CD8-positive, alpha-beta T cell (primary cell): ENCODE measurements at regions of chr4 and their contacts with region 1.

Region 1: GRCh38 chr4:122577808-122578781 is 42.8 kb downstream of the IL21 start:
- DNase-seq: peak; percentile 32 to 89 (median 57)
- ATAC-seq: peak; percentile 83
- H3K4me3 ChIP-seq: no peak overlapping the region
- H3K4me3 Mint-ChIP-seq: peak overlapping the region; percentile 69
- H3K27ac ChIP-seq: peak overlapping the region; percentile 26 to 47
- H3K27ac Mint-ChIP-seq: peak overlapping the region; percentile 92
- H3K4me1 ChIP-seq: peaks cover 12% of the 10 kb centered on the region
- H3K4me1 Mint-ChIP-seq: peaks cover 27% of the 10 kb centered on the region
- H3K27me3 ChIP-seq: no peaks in the 10 kb centered on the region
- H3K27me3 Mint-ChIP-seq: peaks cover 2% of the 10 kb centered on the region
- CTCF ChIP-seq: peak; percentile 83

Region 2: DNA sequence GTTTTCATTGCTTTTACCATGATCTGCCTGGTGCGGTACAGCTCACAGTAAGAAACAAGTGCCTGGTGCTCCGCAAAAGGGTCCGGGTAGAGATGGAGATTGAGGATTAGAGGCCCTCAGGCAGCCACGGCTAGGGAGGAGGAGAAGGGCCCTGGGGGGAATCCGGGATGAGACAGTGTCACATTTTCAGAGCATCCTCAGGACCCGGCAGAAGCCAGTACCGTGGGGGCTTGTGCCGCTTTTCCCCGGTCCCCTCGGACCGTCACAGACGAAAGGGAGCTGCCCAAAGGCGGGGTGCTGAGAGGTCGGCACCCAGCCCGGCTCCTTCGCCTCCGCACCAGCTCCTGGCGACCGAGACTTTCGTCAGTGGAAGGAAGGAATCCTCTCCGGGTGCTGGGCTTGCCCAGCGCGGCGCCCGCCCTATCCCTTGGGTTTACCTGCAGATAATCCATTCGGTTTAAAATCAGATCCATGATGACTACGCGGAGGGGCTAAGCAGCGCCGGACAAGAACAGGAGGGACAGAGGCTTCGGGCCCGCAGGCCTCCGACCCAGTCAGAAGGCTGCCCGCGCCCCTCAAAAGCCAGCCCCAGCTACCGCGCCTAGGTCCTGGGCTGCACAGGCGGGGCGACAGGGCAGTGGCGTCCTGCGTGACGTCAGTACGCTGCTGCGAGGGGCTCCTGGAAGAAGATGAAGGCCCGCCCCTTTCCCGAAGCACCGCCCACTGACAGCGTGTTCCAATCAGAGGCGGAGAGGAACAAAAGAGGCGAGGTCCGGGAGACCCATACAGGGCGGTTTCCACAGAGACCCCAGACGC is 708.0 kb before region 1 on chr4 and contains the start of gene BBS7:
- CTCF ChIA-PET with region 1: no interaction called
- POLR2A ChIA-PET with region 1: no interaction called
- intact Hi-C with region 1: loop called in 1 of 2 experiments (anchors 1 kb)
- DNase-seq: peak; percentile 91 to 98 (median 96)
- ATAC-seq: peak; percentile 99
- H3K4me3 ChIP-seq: peak within 1 kb of the TSS; percentile 88 to 92
- H3K4me3 Mint-ChIP-seq: peak within 1 kb of the TSS; percentile 97
- H3K27ac ChIP-seq: peak within 1 kb of the TSS; percentile 74 to 79
- H3K27ac Mint-ChIP-seq: peak within 1 kb of the TSS; percentile 92
- H3K4me1 ChIP-seq: peaks cover 6% of the 10 kb centered on the region
- H3K4me1 Mint-ChIP-seq: peaks cover 14% of the 10 kb centered on the region
- H3K27me3 ChIP-seq: no peaks in the 10 kb centered on the region
- H3K27me3 Mint-ChIP-seq: peaks cover 7% of the 10 kb centered on the region
- CTCF ChIP-seq: no peak
- total RNA-seq, gene BBS7: 3.4 to 4.7 TPM

Region 3: DNA sequence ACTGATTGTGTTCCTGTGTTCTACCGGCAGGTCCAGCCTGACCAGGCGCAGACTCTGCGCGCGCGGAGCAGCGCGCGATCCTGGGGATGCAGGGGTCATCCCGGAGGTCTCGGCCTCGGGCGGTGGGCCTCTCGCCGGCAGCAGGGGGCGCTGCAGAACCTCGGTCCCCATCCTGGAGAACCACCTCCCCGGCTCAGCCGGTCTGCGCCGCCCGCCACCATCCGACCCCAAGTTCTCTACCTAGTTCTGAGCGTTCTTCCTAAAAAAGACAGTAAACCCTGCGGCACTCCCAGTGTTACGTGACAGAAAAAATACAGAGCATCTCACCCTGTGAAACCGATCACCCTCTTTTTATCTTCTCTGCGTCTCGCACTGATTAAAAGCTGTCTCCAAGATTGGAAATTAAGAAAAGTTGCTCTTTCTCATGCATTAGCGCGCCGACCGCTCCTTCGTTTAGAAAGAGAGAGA is 627.8 kb before region 1 on chr4:
- CTCF ChIA-PET with region 1: interaction called, 3 read pairs
- POLR2A ChIA-PET with region 1: no interaction called
- intact Hi-C with region 1: loop called (anchors 2 kb)
- DNase-seq: peak; percentile 74 to 91 (median 85)
- ATAC-seq: peak; percentile 84
- H3K4me3 ChIP-seq: peak overlapping the region; percentile 65 to 71
- H3K4me3 Mint-ChIP-seq: peak overlapping the region; percentile 88
- H3K27ac ChIP-seq: peak overlapping the region in 1 of 2 experiments; percentile 34
- H3K27ac Mint-ChIP-seq: no peak overlapping the region
- H3K4me1 ChIP-seq: peaks cover 3% of the 10 kb centered on the region
- H3K4me1 Mint-ChIP-seq: peaks cover 8% of the 10 kb centered on the region
- H3K27me3 ChIP-seq: peaks cover 7 to 8% of the 10 kb centered on the region in 2 experiments
- H3K27me3 Mint-ChIP-seq: peaks cover 51% of the 10 kb centered on the region
- CTCF ChIP-seq: peak; percentile 86

Region 4: DNA sequence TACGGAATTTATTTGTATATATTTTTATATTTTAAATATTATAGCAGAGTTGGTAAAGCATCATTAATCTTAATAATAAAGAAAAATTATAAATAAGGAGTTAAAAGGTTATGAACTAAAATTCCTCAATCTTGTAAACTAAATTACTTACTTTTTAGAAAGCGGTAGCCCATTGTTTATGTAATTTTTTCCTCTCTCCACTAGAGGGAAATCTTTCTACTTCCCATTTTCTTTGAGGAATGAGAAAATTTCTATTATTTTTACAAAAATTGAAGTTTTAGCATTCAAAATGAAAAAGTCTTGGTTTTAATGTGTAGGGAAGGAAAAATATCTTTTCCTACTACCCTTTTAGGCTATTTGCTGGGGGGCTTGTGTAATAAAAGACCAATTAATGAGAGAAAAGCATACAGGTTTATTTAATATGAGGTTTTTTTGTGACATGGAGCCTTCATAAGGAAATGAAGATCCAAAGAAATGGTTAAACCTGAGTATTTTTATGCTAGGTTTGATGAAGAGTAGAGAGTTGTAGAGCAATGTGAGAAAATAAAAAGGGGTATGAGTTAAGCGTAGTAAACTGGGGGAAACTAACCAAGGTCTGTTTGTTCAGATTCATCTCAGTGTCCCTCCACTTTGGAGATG is 268.0 kb before region 1 on chr4:
- CTCF ChIA-PET with region 1: interaction called, 22 read pairs
- POLR2A ChIA-PET with region 1: no interaction called
- intact Hi-C with region 1: loop called (anchors 2 kb)
- DNase-seq: peak in 1 of 9 experiments; percentile 11
- ATAC-seq: no peak
- H3K4me3 ChIP-seq: no peak overlapping the region
- H3K4me3 Mint-ChIP-seq: no peak overlapping the region
- H3K27ac ChIP-seq: no peak overlapping the region
- H3K27ac Mint-ChIP-seq: no peak overlapping the region
- H3K4me1 ChIP-seq: no peaks in the 10 kb centered on the region
- H3K4me1 Mint-ChIP-seq: no peaks in the 10 kb centered on the region
- H3K27me3 ChIP-seq: no peaks in the 10 kb centered on the region
- H3K27me3 Mint-ChIP-seq: no peaks in the 10 kb centered on the region
- CTCF ChIP-seq: peak; percentile 63

Region 5: DNA sequence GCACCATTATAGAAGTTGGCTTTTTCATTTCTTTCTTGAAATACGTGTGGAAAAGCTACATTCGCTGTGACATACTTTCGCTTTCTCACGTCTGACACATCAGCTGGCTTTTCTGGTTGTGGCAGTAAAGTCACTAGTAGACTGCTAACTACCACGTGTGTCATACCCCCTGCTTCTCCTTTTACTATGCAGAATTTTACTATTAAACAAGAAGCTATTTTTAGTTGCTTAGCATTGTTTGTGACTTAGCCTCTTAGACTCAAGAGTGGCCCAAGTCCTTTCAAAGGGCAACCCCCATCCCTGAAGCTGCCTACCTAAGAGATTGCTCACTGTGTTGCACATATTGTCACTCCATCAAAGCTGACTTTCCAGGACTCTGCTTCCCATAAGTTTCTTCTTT is 119.5 kb before region 1 on chr4:
- CTCF ChIA-PET with region 1: interaction called, 5 read pairs
- POLR2A ChIA-PET with region 1: no interaction called
- intact Hi-C with region 1: loop called in 1 of 2 experiments (anchors 5 kb)
- DNase-seq: peak in 7 of 9 experiments; percentile 6 to 72 (median 25)
- ATAC-seq: peak; percentile 81
- H3K4me3 ChIP-seq: peak overlapping the region; percentile 37 to 38
- H3K4me3 Mint-ChIP-seq: peak overlapping the region; percentile 81
- H3K27ac ChIP-seq: peak overlapping the region in 1 of 2 experiments; percentile 49
- H3K27ac Mint-ChIP-seq: peak overlapping the region; percentile 85
- H3K4me1 ChIP-seq: peaks cover 23% of the 10 kb centered on the region
- H3K4me1 Mint-ChIP-seq: peaks cover 47% of the 10 kb centered on the region
- H3K27me3 ChIP-seq: no peaks in the 10 kb centered on the region
- H3K27me3 Mint-ChIP-seq: no peaks in the 10 kb centered on the region
- CTCF ChIP-seq: no peak

Region 6: GRCh38 chr4:122930862-122931261 is 352.8 kb after region 1 on chr4:
- CTCF ChIA-PET with region 1: interaction called, 4 read pairs
- POLR2A ChIA-PET with region 1: no interaction called
- intact Hi-C with region 1: loop called (anchors 10 kb)
- DNase-seq: peak in 2 of 9 experiments; percentile 12 to 37
- ATAC-seq: no peak
- H3K4me3 ChIP-seq: no peak overlapping the region
- H3K4me3 Mint-ChIP-seq: no peak overlapping the region
- H3K27ac ChIP-seq: no peak overlapping the region
- H3K27ac Mint-ChIP-seq: no peak overlapping the region
- H3K4me1 ChIP-seq: no peaks in the 10 kb centered on the region
- H3K4me1 Mint-ChIP-seq: peaks cover 9% of the 10 kb centered on the region
- H3K27me3 ChIP-seq: no peaks in the 10 kb centered on the region
- H3K27me3 Mint-ChIP-seq: no peaks in the 10 kb centered on the region
- CTCF ChIP-seq: peak; percentile 68